OCI-LY7 (cell line): ENCODE measurements at regions of chr22 and their contacts with region 1.

Region 1: GRCh38 chr22:29370537-29370936 is 17.8 kb downstream of the AP1B1 start:
- DNase-seq: peak; percentile 95
- H3K4me3 ChIP-seq: peak overlapping the region; percentile 51
- H3K27ac ChIP-seq: peak overlapping the region; percentile 94
- H3K4me1 ChIP-seq: peaks cover 89% of the 10 kb centered on the region
- CTCF ChIP-seq: peak; percentile 54

Region 2: GRCh38 chr22:29190918-29191317 is 179.6 kb before region 1 on chr22:
- CTCF ChIA-PET with region 1: no interaction called
- POLR2A ChIA-PET with region 1: no interaction called
- intact Hi-C with region 1: no loop called
- DNase-seq: no peak
- H3K4me3 ChIP-seq: no peak overlapping the region
- H3K27ac ChIP-seq: no peak overlapping the region
- H3K4me1 ChIP-seq: no peaks in the 10 kb centered on the region
- CTCF ChIP-seq: no peak

Region 3: GRCh38 chr22:29346659-29347058 is 23.9 kb before region 1 on chr22:
- CTCF ChIA-PET with region 1: interaction called, 3 read pairs
- POLR2A ChIA-PET with region 1: interaction called, 6 read pairs
- intact Hi-C with region 1: loop called (anchors 2 kb)
- DNase-seq: no peak
- H3K4me3 ChIP-seq: peak overlapping the region; percentile 32
- H3K27ac ChIP-seq: peak overlapping the region; percentile 96
- H3K4me1 ChIP-seq: peaks cover 42% of the 10 kb centered on the region
- CTCF ChIP-seq: no peak

Region 4: DNA sequence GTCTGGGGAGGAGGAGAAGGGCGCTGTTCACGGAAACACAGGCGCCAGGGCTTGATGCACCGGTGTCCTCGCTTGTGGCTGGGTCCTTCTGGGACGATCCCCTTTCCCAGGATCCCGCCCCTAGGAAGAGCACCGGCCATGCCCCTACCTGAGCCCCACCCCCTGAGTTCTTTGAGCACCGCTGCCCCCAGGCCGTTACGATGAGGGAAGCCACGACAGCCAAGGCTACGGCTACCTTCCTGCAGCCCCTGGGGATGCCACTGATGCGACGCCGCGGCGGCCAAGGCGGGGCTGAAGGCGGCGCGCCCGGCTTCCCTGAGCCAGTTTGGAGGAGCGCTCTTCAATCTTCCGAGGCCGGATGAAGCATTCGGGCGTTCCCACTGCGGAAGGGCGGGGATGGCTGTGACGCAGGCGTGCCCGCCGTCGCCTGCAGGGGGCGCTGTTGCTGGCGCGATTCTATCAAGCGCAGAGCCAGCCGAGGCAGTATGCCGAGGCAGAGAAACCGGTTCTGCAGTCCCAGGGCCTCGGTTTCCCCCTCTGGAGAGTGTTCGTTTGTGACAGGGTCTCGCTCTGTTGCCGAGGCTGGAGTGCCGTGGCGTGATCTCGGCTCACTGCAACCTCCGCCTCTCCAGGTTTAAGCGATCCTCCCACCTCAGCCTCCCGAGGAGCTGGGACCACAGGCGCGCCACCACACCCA is 99.8 kb after region 1 on chr22:
- CTCF ChIA-PET with region 1: no interaction called
- POLR2A ChIA-PET with region 1: no interaction called
- intact Hi-C with region 1: no loop called
- DNase-seq: peak; percentile 81
- H3K4me3 ChIP-seq: peak overlapping the region; percentile 59
- H3K27ac ChIP-seq: no peak overlapping the region
- H3K4me1 ChIP-seq: peaks cover 8% of the 10 kb centered on the region
- CTCF ChIP-seq: peak; percentile 94

Region 5: DNA sequence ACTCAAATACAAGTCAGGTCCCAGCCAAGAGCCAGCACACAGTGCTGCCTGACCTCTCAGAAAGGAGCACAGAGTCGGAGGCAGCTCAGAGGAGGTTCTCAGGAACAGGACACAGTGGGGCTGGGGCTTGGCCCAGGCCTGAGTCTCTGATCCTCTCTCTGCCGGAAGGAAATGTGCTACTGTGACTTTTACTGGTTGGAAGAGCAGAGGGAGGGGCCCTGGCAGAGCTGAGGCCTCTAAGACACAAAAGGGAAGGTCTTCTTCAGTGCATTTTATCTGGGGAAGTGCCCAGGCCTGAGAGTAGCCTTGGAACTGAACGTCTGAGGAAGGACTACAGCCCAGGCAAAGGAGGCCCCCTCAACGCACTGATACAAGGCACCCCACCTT is 935.0 kb after region 1 on chr22:
- CTCF ChIA-PET with region 1: no interaction called
- POLR2A ChIA-PET with region 1: no interaction called
- intact Hi-C with region 1: loop called (anchors 5 kb)
- DNase-seq: peak; percentile 90
- H3K4me3 ChIP-seq: peak overlapping the region; percentile 61
- H3K27ac ChIP-seq: peak overlapping the region; percentile 94
- H3K4me1 ChIP-seq: peaks cover 96% of the 10 kb centered on the region
- CTCF ChIP-seq: no peak